Dorsolateral prefrontal cortex (tissue), 120 donors: ENCODE measurements at regions of chr1 and their contacts with region 1.

Region 1: DNA sequence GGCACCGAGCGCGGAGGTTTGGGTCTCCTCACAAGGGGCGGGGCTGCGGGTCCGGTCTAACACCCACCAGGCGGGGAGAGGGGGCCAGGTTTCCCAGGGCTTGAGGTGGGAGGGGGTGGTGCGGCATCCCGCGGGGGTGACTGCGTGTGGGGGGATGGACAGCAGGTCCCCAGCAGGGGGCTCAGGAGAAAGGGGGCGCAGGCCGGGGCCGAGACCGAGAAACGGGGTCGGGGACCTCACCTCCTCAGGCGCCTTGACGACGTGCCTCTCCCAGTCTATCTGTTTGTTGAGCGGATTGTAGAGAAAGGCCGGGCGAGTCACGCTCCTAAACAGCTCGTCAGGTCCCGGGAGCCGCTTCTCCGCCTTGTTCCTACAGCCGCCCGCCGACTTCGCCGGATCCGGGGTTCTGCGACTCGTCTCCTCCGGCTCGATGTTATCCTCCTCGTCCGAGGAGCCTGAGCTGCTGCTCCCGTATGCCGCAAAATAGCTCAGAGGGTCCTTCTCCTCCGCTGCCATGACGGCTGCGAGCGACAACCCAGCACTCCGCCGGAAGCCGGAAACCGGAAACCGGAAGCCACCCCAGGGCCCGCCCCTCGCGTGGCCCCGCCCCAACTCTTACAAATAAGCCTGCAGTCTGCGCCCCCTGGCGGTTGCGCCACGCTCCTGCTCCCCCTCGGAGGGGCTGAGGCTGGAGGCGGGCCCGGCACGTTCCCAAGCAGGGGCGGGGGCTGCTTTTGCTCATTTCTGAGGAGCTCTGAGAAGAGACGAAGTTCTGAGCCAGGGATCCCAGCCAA is at the start of gene C1orf52:
- DNase-seq: peak; percentile 91 to 97 (median 95)
- H3K4me3 ChIP-seq: peak within 1 kb of the TSS; percentile 68 to 99 (median 95)
- H3K27ac ChIP-seq: peak within 1 kb of the TSS in 53 of 59 donors; percentile 11 to 92 (median 73)
- H3K27me3 ChIP-seq: no peaks in the 10 kb centered on the region
- CTCF ChIP-seq: peak; percentile 95 to 100 (median 99)
- total RNA-seq, gene C1orf52: 28.8 to 59.4 (median 45.6) TPM

Region 2: GRCh38 chr1:84944767-84945486 is 314.4 kb before region 1 on chr1:
- intact Hi-C with region 1: loop called (anchors 2 kb)
- DNase-seq: peak in 8 of 10 donors; percentile 30 to 66 (median 51)
- H3K4me3 ChIP-seq: peak overlapping the region; percentile 7 to 65 (median 48)
- H3K27ac ChIP-seq: peak overlapping the region in 25 of 59 donors; percentile 5 to 59 (median 34)
- H3K27me3 ChIP-seq: no peaks in the 10 kb centered on the region
- CTCF ChIP-seq: peak; percentile 77 to 99 (median 94)

Region 3: DNA sequence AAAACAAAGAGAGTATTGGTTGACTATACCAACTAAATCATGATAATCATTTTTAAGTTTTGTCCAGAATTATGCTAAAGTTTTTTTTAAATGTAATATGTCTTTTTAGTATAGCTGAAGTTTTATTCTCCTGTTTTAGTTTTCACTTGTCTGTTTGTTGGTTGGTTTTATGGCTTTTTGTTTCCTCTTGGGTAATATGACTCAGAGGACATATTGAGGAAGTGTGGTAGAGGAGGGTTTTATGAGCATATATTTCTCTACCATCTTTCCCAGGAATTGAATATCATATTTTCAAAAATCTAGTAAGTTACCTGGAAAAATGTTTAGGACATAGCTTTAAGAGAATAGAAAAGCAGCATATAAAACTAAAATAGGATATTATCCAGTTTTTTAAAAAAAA is 142.5 kb before region 1 on chr1:
- intact Hi-C with region 1: loop called in 1 of 2 experiments (anchors 10 kb)
- DNase-seq: no peak
- H3K4me3 ChIP-seq: no peak overlapping the region
- H3K27ac ChIP-seq: no peak overlapping the region
- H3K27me3 ChIP-seq: no peaks in the 10 kb centered on the region
- CTCF ChIP-seq: no peak

Region 4: GRCh38 chr1:85276215-85276977 is 17.1 kb after region 1 on chr1 and contains the start of gene BCL10:
- intact Hi-C with region 1: loop called in 1 of 2 experiments (anchors 2 kb)
- DNase-seq: peak; percentile 96 to 100 (median 99)
- H3K4me3 ChIP-seq: peak within 1 kb of the TSS; percentile 72 to 100 (median 92)
- H3K27ac ChIP-seq: peak within 1 kb of the TSS; percentile 7 to 97 (median 87)
- H3K27me3 ChIP-seq: no peaks in the 10 kb centered on the region
- CTCF ChIP-seq: peak in 23 of 56 donors; percentile 9 to 54 (median 36)
- total RNA-seq, gene BCL10: 7.7 to 24.2 (median 12.6) TPM